ENCODE measurements at regions of chr16 and their contacts with region 1.

Region 1: GRCh38 chr16:56311208-56312027 is 113.9 kb downstream of the AMFR start:
- DNase-seq: no peak
- H3K4me3 ChIP-seq: no peak overlapping the region
- H3K27ac ChIP-seq: no peak overlapping the region
- H3K4me1 ChIP-seq: peaks cover 0 to under 1% (median 0%) of the 10 kb centered on the region in 4 experiments; a peak in 2 of 7 replicates
- H3K27me3 ChIP-seq: no peaks in the 10 kb centered on the region
- CTCF ChIP-seq: peak; percentile 65 to 83 (median 77)
- EP300 ChIP-seq: no peak
- POLR2A ChIP-seq: no peak
- RAD21 ChIP-seq: peak; percentile 44 to 60

Region 2: DNA sequence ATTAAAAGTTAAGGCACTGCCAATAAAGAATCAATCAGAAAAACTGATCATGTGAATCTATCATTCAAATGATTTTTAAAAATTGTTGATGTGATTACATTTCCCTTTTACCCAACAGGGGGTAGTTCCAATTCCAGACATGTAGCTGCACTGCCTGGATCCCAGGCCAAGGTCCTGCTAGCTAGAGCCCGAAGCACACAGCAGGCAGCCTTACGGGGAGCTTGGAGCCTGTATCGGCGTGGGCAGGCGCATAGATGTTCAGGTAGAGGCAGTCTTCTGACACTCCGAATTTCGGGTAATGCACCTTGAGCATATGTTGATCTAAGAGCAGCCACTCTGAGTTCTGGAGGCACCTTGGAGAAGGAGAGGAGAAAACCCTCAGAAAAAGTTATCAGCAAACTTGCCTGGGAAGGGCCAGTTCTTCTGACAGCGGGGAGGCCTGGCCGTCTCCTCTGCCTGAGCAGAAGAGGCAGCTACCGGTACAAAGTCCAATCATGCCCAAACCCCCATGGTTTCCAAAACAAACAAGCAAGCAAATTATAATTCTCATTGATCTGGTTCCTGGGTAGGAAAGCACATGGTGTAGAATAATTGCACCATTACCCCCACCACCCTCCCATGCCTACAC is 439.9 kb before region 1 on chr16:
- CTCF ChIA-PET with region 1: no interaction called
- POLR2A ChIA-PET with region 1: no interaction called
- DNase-seq: no peak
- H3K4me3 ChIP-seq: no peak overlapping the region
- H3K27ac ChIP-seq: no peak overlapping the region
- H3K4me1 ChIP-seq: no peaks in the 10 kb centered on the region
- H3K27me3 ChIP-seq: no peaks in the 10 kb centered on the region
- CTCF ChIP-seq: no peak
- EP300 ChIP-seq: no peak
- POLR2A ChIP-seq: no peak
- RAD21 ChIP-seq: no peak

Region 3: GRCh38 chr16:56262148-56262547 is 49.3 kb before region 1 on chr16:
- CTCF ChIA-PET with region 1: interaction called, 12 read pairs
- POLR2A ChIA-PET with region 1: no interaction called
- DNase-seq: no peak
- H3K4me3 ChIP-seq: no peak overlapping the region
- H3K27ac ChIP-seq: no peak overlapping the region
- H3K4me1 ChIP-seq: peaks cover 0 to 3% (median 0%) of the 10 kb centered on the region in 4 experiments; a peak in 3 of 7 replicates
- H3K27me3 ChIP-seq: no peaks in the 10 kb centered on the region
- CTCF ChIP-seq: no peak
- EP300 ChIP-seq: no peak
- POLR2A ChIP-seq: no peak
- RAD21 ChIP-seq: no peak

Region 4: GRCh38 chr16:56286809-56287208 is 24.6 kb before region 1 on chr16:
- CTCF ChIA-PET with region 1: interaction called, 16 read pairs
- POLR2A ChIA-PET with region 1: interaction called, 5 read pairs
- DNase-seq: no peak
- H3K4me3 ChIP-seq: no peak overlapping the region
- H3K27ac ChIP-seq: no peak overlapping the region
- H3K4me1 ChIP-seq: peaks cover 0 to 27% (median 17%) of the 10 kb centered on the region in 4 experiments; a peak in 6 of 7 replicates
- H3K27me3 ChIP-seq: no peaks in the 10 kb centered on the region
- CTCF ChIP-seq: no peak
- EP300 ChIP-seq: no peak
- POLR2A ChIP-seq: no peak
- RAD21 ChIP-seq: no peak

Region 5: GRCh38 chr16:56300891-56301850 is 10.2 kb before region 1 on chr16:
- CTCF ChIA-PET with region 1: interaction called, 18 read pairs
- POLR2A ChIA-PET with region 1: interaction called, 3 read pairs
- DNase-seq: no peak
- H3K4me3 ChIP-seq: no peak overlapping the region
- H3K27ac ChIP-seq: no peak overlapping the region
- H3K4me1 ChIP-seq: peaks cover 8 to 11% (median 10%) of the 10 kb centered on the region in 4 experiments; a peak in 6 of 7 replicates
- H3K27me3 ChIP-seq: peaks cover 0 to 2% (median 0%) of the 10 kb centered on the region in 4 experiments; a peak in 1 of 7 replicates
- CTCF ChIP-seq: no peak
- EP300 ChIP-seq: no peak
- POLR2A ChIP-seq: no peak
- RAD21 ChIP-seq: no peak